CD8-positive, alpha-beta T cell (primary cell): ENCODE measurements at regions of chr14 and their contacts with region 1.

Region 1: GRCh38 chr14:23555882-23556699 is at the start of gene THTPA:
- DNase-seq: peak; percentile 86 to 96 (median 93)
- ATAC-seq: peak; percentile 87
- H3K4me3 ChIP-seq: peak within 1 kb of the TSS; percentile 76 to 98
- H3K4me3 Mint-ChIP-seq: peak within 1 kb of the TSS; percentile 95
- H3K27ac ChIP-seq: peak within 1 kb of the TSS; percentile 64 to 79
- H3K27ac Mint-ChIP-seq: peak within 1 kb of the TSS; percentile 93
- H3K4me1 ChIP-seq: peaks cover 24% of the 10 kb centered on the region
- H3K4me1 Mint-ChIP-seq: peaks cover 31% of the 10 kb centered on the region
- H3K27me3 ChIP-seq: peaks cover 0 to 2% of the 10 kb centered on the region in 2 experiments
- H3K27me3 Mint-ChIP-seq: no peaks in the 10 kb centered on the region
- CTCF ChIP-seq: no peak
- total RNA-seq, gene THTPA: 10.7 to 12.4 TPM

Region 2: GRCh38 chr14:23068476-23069412 is 487.3 kb before region 1 on chr14:
- CTCF ChIA-PET with region 1: no interaction called
- POLR2A ChIA-PET with region 1: no interaction called
- intact Hi-C with region 1: loop called in 1 of 2 experiments (anchors 10 kb)
- DNase-seq: peak; percentile 52 to 90 (median 73)
- ATAC-seq: peak; percentile 76
- H3K4me3 ChIP-seq: no peak overlapping the region
- H3K4me3 Mint-ChIP-seq: no peak overlapping the region
- H3K27ac ChIP-seq: no peak overlapping the region
- H3K27ac Mint-ChIP-seq: peak overlapping the region; percentile 39
- H3K4me1 ChIP-seq: peaks cover 28% of the 10 kb centered on the region
- H3K4me1 Mint-ChIP-seq: peaks cover 46% of the 10 kb centered on the region
- H3K27me3 ChIP-seq: no peaks in the 10 kb centered on the region
- H3K27me3 Mint-ChIP-seq: no peaks in the 10 kb centered on the region
- CTCF ChIP-seq: peak; percentile 99

Region 3: DNA sequence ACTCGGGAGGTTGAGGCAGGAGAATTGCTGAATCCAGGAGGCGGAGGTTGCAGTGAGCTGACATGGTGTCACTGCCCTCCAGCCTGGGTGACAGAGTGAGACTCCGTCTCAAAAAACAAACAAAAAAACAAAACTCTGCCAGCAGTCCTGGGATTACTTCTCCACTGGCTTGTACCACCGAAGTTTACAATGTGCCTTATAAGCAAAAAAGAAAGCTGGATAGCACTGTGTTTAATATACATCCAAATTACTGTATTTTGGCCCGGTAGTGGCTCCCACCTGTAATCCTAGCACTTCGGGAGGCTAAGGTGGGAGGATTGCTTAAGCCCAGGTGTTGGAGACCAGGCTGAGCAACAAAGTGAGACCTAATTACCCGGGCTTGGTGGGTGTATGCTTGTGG is 286.9 kb before region 1 on chr14:
- CTCF ChIA-PET with region 1: no interaction called
- POLR2A ChIA-PET with region 1: no interaction called
- intact Hi-C with region 1: loop called in 1 of 2 experiments (anchors 5 kb)
- DNase-seq: no peak
- ATAC-seq: no peak
- H3K4me3 ChIP-seq: no peak overlapping the region
- H3K4me3 Mint-ChIP-seq: no peak overlapping the region
- H3K27ac ChIP-seq: no peak overlapping the region
- H3K27ac Mint-ChIP-seq: no peak overlapping the region
- H3K4me1 ChIP-seq: no peaks in the 10 kb centered on the region
- H3K4me1 Mint-ChIP-seq: no peaks in the 10 kb centered on the region
- H3K27me3 ChIP-seq: peaks cover 0 to 2% of the 10 kb centered on the region in 2 experiments
- H3K27me3 Mint-ChIP-seq: peaks cover 2% of the 10 kb centered on the region
- CTCF ChIP-seq: no peak

Region 4: GRCh38 chr14:23478111-23478759 is 77.9 kb before region 1 on chr14:
- CTCF ChIA-PET with region 1: interaction called, 279 read pairs
- POLR2A ChIA-PET with region 1: interaction called, 5 read pairs
- intact Hi-C with region 1: loop called (anchors 1 kb)
- DNase-seq: peak; percentile 27 to 80 (median 69)
- ATAC-seq: peak; percentile 82
- H3K4me3 ChIP-seq: no peak overlapping the region
- H3K4me3 Mint-ChIP-seq: no peak overlapping the region
- H3K27ac ChIP-seq: peak overlapping the region in 1 of 2 experiments; percentile 3
- H3K27ac Mint-ChIP-seq: no peak overlapping the region
- H3K4me1 ChIP-seq: no peaks in the 10 kb centered on the region
- H3K4me1 Mint-ChIP-seq: peaks cover 9% of the 10 kb centered on the region
- H3K27me3 ChIP-seq: no peaks in the 10 kb centered on the region
- H3K27me3 Mint-ChIP-seq: no peaks in the 10 kb centered on the region
- CTCF ChIP-seq: peak; percentile 79

Region 5: GRCh38 chr14:23539248-23540140 is 16.6 kb before region 1 on chr14:
- CTCF ChIA-PET with region 1: interaction called, 49 read pairs
- POLR2A ChIA-PET with region 1: no interaction called
- intact Hi-C with region 1: loop called in 1 of 2 experiments (anchors 1 kb)
- DNase-seq: peak in 3 of 9 experiments; percentile 28 to 68 (median 56)
- ATAC-seq: peak; percentile 84
- H3K4me3 ChIP-seq: no peak overlapping the region
- H3K4me3 Mint-ChIP-seq: no peak overlapping the region
- H3K27ac ChIP-seq: no peak overlapping the region
- H3K27ac Mint-ChIP-seq: no peak overlapping the region
- H3K4me1 ChIP-seq: no peaks in the 10 kb centered on the region
- H3K4me1 Mint-ChIP-seq: peaks cover 2% of the 10 kb centered on the region
- H3K27me3 ChIP-seq: no peaks in the 10 kb centered on the region
- H3K27me3 Mint-ChIP-seq: no peaks in the 10 kb centered on the region
- CTCF ChIP-seq: peak; percentile 64

Region 6: DNA sequence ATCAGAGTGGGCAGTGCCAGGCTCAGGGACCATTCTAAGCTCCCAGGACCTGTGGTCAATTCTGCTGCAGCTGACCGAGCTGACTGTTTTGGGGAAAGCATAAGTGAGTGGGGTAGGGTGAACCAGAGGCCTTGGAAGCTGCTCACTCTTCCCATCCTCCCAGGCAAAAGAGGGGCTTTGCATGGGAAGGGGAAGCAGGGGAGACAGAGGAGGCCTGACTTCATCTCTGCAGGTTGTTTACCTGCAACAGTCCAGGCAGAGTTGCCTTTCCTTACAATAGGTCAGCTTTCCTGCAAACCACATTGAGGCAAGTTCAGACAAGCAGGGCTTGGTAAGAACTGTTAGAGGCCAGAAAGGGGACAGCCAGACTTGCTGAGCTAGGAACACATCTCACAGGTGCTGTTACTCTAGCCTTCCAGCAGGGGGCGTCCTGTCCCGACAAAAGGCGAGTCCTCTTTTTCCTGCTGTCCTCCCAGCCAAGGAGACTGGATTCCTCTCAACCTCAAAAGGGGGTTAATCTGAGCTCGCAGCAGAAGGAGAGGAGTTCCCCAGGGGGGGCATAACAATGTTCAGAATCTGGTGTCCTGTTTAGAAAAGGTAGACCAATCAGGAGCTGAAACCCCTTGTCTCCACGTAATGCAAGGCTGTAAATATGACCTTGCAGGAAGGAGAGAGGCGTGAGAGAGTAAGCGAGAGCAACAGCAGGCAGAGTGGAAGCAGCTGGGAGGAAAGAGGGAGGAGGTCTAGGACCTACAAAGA is 75.8 kb after region 1 on chr14:
- CTCF ChIA-PET with region 1: interaction called, 10 read pairs
- POLR2A ChIA-PET with region 1: no interaction called
- intact Hi-C with region 1: no loop called
- DNase-seq: peak; percentile 41 to 86 (median 75)
- ATAC-seq: peak; percentile 88
- H3K4me3 ChIP-seq: peak overlapping the region; percentile 21 to 33
- H3K4me3 Mint-ChIP-seq: peak overlapping the region; percentile 75
- H3K27ac ChIP-seq: no peak overlapping the region
- H3K27ac Mint-ChIP-seq: peak overlapping the region; percentile 42
- H3K4me1 ChIP-seq: peaks cover 13% of the 10 kb centered on the region
- H3K4me1 Mint-ChIP-seq: peaks cover 7% of the 10 kb centered on the region
- H3K27me3 ChIP-seq: no peaks in the 10 kb centered on the region
- H3K27me3 Mint-ChIP-seq: no peaks in the 10 kb centered on the region
- CTCF ChIP-seq: peak; percentile 97

Region 7: DNA sequence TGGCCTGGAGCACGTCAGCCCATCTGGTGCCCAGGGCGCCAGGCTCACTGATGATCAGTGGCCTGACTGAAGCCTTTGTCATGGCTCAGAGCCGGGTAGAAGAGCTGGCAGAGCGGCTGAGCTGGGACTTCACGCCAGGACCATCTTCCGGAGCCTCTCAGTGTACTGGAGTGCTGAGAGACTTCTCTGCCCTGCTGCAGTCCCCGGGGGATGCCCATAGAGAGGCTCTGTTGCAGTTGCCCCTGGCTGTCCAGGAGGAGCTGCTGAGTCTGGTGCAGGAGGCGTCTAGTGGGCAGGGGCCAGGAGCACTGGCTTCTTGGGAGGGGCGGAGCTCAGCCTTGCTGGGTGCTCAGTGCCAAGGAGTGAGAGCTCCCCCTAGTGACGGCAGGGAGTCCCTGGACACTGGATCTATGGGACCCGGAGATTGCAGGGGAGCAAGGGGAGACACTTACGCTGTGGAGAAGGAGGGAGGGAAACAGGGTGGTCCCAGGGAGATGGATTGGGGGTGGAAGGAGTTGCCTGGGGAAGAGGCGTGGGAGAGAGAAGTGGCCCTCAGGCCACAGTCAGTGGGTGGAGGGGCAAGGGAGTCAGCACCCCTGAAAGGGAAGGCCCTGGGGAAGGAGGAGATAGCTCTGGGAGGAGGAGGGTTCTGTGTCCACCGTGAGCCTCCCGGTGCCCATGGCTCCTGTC is 875.6 kb after region 1 on chr14:
- CTCF ChIA-PET with region 1: no interaction called
- POLR2A ChIA-PET with region 1: no interaction called
- intact Hi-C with region 1: loop called in 1 of 2 experiments (anchors 10 kb)
- DNase-seq: peak; percentile 77 to 94 (median 90)
- ATAC-seq: peak; percentile 52
- H3K4me3 ChIP-seq: peak overlapping the region in 1 of 2 experiments; percentile 71
- H3K4me3 Mint-ChIP-seq: peak overlapping the region; percentile 93
- H3K27ac ChIP-seq: peak overlapping the region; percentile 31 to 90
- H3K27ac Mint-ChIP-seq: peak overlapping the region; percentile 98
- H3K4me1 ChIP-seq: peaks cover 47% of the 10 kb centered on the region
- H3K4me1 Mint-ChIP-seq: peaks cover 45% of the 10 kb centered on the region
- H3K27me3 ChIP-seq: no peaks in the 10 kb centered on the region
- H3K27me3 Mint-ChIP-seq: no peaks in the 10 kb centered on the region
- CTCF ChIP-seq: peak; percentile 83